ENCODE measurements at regions of chr1 and their contacts with region 1.

Region 1: DNA sequence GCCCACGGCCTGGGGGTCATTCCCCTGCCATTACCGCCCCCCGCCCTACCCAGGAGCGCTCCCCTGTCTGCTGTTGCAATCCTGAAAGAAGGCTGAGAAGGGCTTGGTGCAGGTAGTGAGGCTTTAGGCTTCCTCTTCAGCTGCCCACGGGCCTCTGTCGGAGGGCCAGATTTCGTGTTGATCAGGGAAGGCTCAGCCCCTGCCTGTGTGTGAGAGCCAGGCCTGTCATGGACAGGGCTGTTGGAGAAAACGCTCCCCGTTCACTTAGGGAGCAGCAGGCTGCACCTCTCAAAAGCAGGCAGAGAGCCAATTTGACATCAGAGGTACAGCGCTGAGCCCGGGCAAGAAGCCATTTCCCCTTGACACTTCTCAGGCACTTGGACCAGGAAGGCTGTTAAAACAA is 19.0 kb downstream of the TEX35 start:
- DNase-seq: peak in 1 of 2 donors; percentile 86
- H3K4me3 ChIP-seq: no peak overlapping the region
- H3K27ac ChIP-seq: no peak overlapping the region
- H3K4me1 ChIP-seq: peaks cover 14% of the 10 kb centered on the region
- H3K27me3 ChIP-seq: no peaks in the 10 kb centered on the region
- CTCF ChIP-seq: no peak
- POLR2A ChIP-seq: no peak

Region 2: DNA sequence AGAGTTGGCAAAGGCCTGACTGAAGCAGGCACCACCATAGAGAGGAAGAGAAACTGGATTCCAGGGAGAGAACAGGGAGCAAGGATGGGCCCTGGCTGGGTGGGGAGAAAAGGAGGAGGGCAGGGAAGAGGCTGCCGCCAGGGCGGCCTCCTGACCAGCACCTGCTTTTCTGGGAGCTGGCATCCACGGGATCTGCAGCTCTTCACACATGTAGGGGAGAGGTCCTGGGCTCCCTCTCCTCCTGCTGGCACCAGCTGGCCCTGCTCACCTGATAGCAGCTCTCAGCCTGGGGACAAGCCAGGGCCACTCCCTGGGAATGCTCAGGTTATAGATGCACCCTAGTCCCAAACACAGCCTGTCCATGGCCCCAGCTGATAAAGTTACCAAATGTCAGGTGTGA is 21.0 kb after region 1 on chr1:
- intact Hi-C with region 1: loop called (anchors 1 kb)
- DNase-seq: peak in 1 of 2 donors; percentile 84
- H3K4me3 ChIP-seq: no peak overlapping the region
- H3K27ac ChIP-seq: no peak overlapping the region
- H3K4me1 ChIP-seq: no peaks in the 10 kb centered on the region
- H3K27me3 ChIP-seq: no peaks in the 10 kb centered on the region
- CTCF ChIP-seq: no peak
- POLR2A ChIP-seq: no peak

Measured in vagina (tissue), 2 donors.